ENCODE measurements at regions of chr5 and their contacts with region 1.

Region 1: DNA sequence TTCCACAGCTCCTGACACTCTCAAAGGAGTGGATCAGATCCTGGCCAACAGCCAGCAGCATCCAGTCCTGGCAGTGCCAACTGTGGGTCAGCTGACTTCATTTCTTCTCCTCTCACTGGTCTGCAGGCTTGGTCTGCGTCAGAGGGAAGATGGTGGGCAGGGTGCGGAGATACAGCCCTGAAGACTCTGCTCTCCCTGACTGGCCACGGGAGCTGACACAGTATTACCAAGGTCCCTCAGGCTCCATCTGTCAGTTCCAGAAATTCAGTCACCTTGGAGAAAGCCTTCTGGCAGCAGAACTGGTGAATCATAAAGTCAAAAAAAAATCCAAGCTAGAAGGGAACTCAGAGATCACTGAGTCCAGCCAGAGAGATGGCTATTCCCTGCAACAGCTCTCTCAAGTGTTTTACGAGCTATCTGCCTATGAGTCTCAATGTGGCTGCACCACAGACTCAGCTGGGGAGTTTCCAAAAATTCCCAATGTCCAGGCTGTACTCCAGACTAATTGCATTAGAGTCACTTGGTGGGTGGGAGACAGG is 28.0 kb downstream of the C1QTNF2 start:
- DNase-seq: no peak
- H3K4me3 ChIP-seq: no peak overlapping the region
- H3K4me1 ChIP-seq: no peaks in the 10 kb centered on the region
- H3K27me3 ChIP-seq: no peaks in the 10 kb centered on the region

Region 2: DNA sequence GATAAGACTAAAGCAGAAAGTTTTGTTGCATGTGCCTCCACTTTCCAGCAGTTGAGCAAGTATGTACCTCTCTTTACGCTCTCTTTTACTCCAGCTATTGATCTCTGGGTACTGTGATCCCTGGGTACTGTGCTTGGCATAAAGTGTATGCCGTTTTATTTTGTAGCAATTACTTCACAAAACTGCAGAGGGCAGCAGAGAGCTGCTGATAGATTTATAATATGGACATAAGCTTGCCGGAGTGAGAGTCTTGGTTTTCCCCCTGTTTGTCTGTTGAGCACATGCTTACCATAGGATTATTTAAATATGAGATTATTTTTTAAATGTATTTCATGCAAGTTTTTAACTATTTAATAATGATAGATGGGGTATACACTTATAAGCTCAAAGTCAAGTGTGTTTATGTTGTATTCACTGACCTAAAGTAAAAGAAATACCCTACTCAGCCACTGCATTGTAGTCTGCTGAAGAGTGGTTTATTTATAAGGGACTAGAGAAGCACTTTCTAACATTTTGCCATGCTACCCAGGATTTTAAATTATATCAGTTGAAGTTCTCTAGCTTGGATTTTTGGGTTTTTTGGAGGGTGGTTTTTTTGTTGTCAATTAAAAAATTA is 320.5 kb before region 1 on chr5:
- in situ Hi-C with region 1: loop called (anchors 5 kb)
- DNase-seq: peak; percentile 65 to 71
- H3K4me3 ChIP-seq: no peak overlapping the region
- H3K4me1 ChIP-seq: peaks cover 7% of the 10 kb centered on the region
- H3K27me3 ChIP-seq: no peaks in the 10 kb centered on the region

Region 3: GRCh38 chr5:160199410-160199911 is 143.0 kb before region 1 on chr5:
- in situ Hi-C with region 1: loop called (anchors 10 kb)
- DNase-seq: peak; percentile 45 to 87
- H3K4me3 ChIP-seq: peak overlapping the region; percentile 3; the same call in 1 of the 2 replicates
- H3K4me1 ChIP-seq: peaks cover 9% of the 10 kb centered on the region
- H3K27me3 ChIP-seq: no peaks in the 10 kb centered on the region

Region 4: GRCh38 chr5:160665460-160665859 is 323.0 kb after region 1 on chr5:
- in situ Hi-C with region 1: no loop called
- DNase-seq: no peak
- H3K4me3 ChIP-seq: no peak overlapping the region
- H3K4me1 ChIP-seq: no peaks in the 10 kb centered on the region
- H3K27me3 ChIP-seq: no peaks in the 10 kb centered on the region

Measured in HAP-1 (cell line).